ENCODE measurements at regions of chr20 and their contacts with region 1.

Region 1: DNA sequence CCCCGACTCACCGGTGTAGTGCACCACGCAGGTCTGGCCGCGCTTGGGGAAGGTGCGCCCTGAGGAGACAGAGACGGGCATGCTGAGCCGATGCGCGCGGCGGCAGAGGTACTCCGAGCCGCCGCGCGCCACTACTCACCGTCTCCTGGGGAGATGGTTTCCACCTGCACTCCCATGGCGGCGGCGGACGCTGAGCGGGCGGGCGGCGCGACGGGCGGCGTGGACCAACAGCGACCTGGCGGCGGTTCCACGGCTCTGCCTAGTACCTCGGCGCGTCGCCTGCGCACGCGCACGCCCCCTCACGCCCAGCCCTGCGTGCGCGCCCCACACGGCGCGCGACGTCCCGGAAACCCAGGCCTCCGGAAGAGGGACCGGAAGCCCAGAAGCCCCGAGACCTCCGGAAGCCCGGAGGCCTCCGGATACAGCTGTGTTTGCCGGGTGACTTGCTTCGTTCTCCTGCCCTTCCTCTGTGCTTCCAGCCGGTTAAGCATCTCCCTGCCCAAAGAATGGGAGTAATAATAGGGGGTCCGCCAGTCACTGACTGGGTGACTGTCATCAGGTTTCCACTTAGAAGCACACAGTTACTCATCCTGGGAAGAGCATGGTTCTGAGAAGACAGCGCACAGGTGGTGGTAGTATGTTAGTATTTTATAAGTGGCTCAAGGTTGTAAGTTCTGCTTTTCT is at the start of gene FKBP1A:
- DNase-seq: peak; percentile 90 to 97 (median 94)
- ATAC-seq: peak; percentile 91 to 99 (median 96)
- H3K4me3 ChIP-seq: peak within 1 kb of the TSS; percentile 54 to 96 (median 84)
- H3K27ac ChIP-seq: peak within 1 kb of the TSS; percentile 68 to 94 (median 89)
- H3K4me1 ChIP-seq: peaks cover 6 to 54% (median 40%) of the 10 kb centered on the region in 12 donors
- H3K27me3 ChIP-seq: peaks cover 0 to 10% (median 0%) of the 10 kb centered on the region in 9 donors
- CTCF ChIP-seq: peak in 7 of 12 donors; percentile 17 to 50 (median 24)
- POLR2A ChIP-seq: peak; percentile 38 to 80
- total RNA-seq, gene FKBP1A: 71.3 to 316 (median 144) TPM

Region 2: GRCh38 chr20:833450-834150 is 559.4 kb before region 1 on chr20 and contains the start of gene FAM110A:
- intact Hi-C with region 1: loop called in 1 of 10 experiments (anchors 10 kb)
- DNase-seq: peak; percentile 97 to 98 (median 98)
- ATAC-seq: peak; percentile 94 to 98 (median 97)
- H3K4me3 ChIP-seq: peak within 1 kb of the TSS; percentile 69 to 97 (median 81)
- H3K27ac ChIP-seq: peak within 1 kb of the TSS; percentile 49 to 96 (median 84)
- H3K4me1 ChIP-seq: peaks cover 0 to 49% (median 22%) of the 10 kb centered on the region in 12 donors
- H3K27me3 ChIP-seq: no peaks in the 10 kb centered on the region
- CTCF ChIP-seq: no peak
- POLR2A ChIP-seq: no peak
- total RNA-seq, gene FAM110A: 1.2 to 8.1 (median 2.3) TPM

Region 3: GRCh38 chr20:1325173-1326030 is 67.6 kb before region 1 on chr20:
- intact Hi-C with region 1: loop called (anchors 1 to 5 kb)
- DNase-seq: peak; percentile 98 to 99 (median 98)
- ATAC-seq: peak; percentile 90 to 93 (median 91)
- H3K4me3 ChIP-seq: peak overlapping the region; percentile 60 to 96 (median 78)
- H3K27ac ChIP-seq: peak overlapping the region; percentile 96 to 100 (median 99)
- H3K4me1 ChIP-seq: peaks cover 22 to 90% (median 72%) of the 10 kb centered on the region in 12 donors
- H3K27me3 ChIP-seq: no peaks in the 10 kb centered on the region
- CTCF ChIP-seq: peak in 9 of 12 donors; percentile 10 to 50 (median 29)
- POLR2A ChIP-seq: peak; percentile 78 to 79

Region 4: GRCh38 chr20:1375515-1375914 is 17.4 kb before region 1 on chr20:
- intact Hi-C with region 1: loop called in 1 of 10 experiments (anchors 2 kb)
- DNase-seq: no peak
- ATAC-seq: peak in 3 of 4 donors; percentile 46 to 64 (median 64)
- H3K4me3 ChIP-seq: peak overlapping the region in 1 of 12 donors; percentile 2
- H3K27ac ChIP-seq: peak overlapping the region in 11 of 12 donors; percentile 5 to 88 (median 62)
- H3K4me1 ChIP-seq: peaks cover 8 to 100% (median 86%) of the 10 kb centered on the region in 12 donors
- H3K27me3 ChIP-seq: no peaks in the 10 kb centered on the region
- CTCF ChIP-seq: no peak
- POLR2A ChIP-seq: no peak

Region 5: GRCh38 chr20:1466211-1467081 is 73.5 kb after region 1 on chr20 and contains the start of gene NSFL1C:
- intact Hi-C with region 1: loop called in 2 of 10 experiments (anchors 5 kb)
- DNase-seq: peak; percentile 95 to 97 (median 97)
- ATAC-seq: peak; percentile 90 to 98 (median 96)
- H3K4me3 ChIP-seq: peak within 1 kb of the TSS; percentile 73 to 99 (median 92)
- H3K27ac ChIP-seq: peak within 1 kb of the TSS; percentile 80 to 96 (median 89)
- H3K4me1 ChIP-seq: peaks cover 5 to 69% (median 28%) of the 10 kb centered on the region in 12 donors
- H3K27me3 ChIP-seq: no peaks in the 10 kb centered on the region
- CTCF ChIP-seq: peak in 11 of 12 donors; percentile 88 to 100 (median 98)
- POLR2A ChIP-seq: peak in 1 of 2 donors; percentile 65
- total RNA-seq, gene NSFL1C: 27.9 to 66.6 (median 62.1) TPM

Region 6: DNA sequence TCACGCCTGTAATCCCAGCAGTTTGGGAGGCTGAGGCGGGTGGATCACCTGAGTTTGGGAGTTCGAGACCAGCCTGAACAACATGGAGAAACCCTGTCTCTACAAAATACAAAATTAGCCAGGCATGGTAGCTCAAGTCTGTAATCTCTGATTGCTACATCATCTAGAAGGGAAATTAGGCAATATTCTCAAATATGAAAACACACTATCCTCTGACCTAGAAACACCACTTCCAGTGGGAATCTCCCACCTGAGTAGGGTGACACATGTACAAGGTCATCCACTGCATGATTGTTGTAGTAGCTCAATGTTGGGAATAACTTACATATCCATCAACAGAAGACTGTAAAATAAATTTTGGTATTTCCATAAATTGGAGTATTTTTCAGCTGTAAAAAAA is 183.7 kb after region 1 on chr20:
- intact Hi-C with region 1: no loop called
- DNase-seq: no peak
- ATAC-seq: no peak
- H3K4me3 ChIP-seq: no peak overlapping the region
- H3K27ac ChIP-seq: no peak overlapping the region
- H3K4me1 ChIP-seq: no peaks in the 10 kb centered on the region
- H3K27me3 ChIP-seq: no peaks in the 10 kb centered on the region
- CTCF ChIP-seq: no peak
- POLR2A ChIP-seq: no peak